Heart right ventricle (tissue), 16 donors: ENCODE measurements at regions of chr1 and their contacts with region 1.

Region 1: GRCh38 chr1:41516168-41517061 is 31.9 kb upstream of the EDN2 start:
- DNase-seq: peak; percentile 91 to 94
- ATAC-seq: peak; percentile 94 to 98 (median 96)
- H3K4me3 ChIP-seq: peak overlapping the region; percentile 26 to 58 (median 50)
- H3K27ac ChIP-seq: peak overlapping the region in 5 of 10 donors; percentile 15 to 48 (median 21)
- H3K4me1 ChIP-seq: peaks cover 16 to 38% (median 22%) of the 10 kb centered on the region in 9 donors
- H3K27me3 ChIP-seq: no peaks in the 10 kb centered on the region
- CTCF ChIP-seq: peak; percentile 90 to 97 (median 92)

Region 2: GRCh38 chr1:41496080-41497055 is 20.0 kb before region 1 on chr1:
- intact Hi-C with region 1: loop called in 1 of 10 experiments (anchors 2 kb)
- DNase-seq: peak; percentile 84 to 90
- ATAC-seq: peak; percentile 74 to 87 (median 84)
- H3K4me3 ChIP-seq: peak overlapping the region in 9 of 10 donors; percentile 9 to 54 (median 44)
- H3K27ac ChIP-seq: peak overlapping the region; percentile 77 to 97 (median 92)
- H3K4me1 ChIP-seq: peaks cover 17 to 64% (median 44%) of the 10 kb centered on the region in 9 donors
- H3K27me3 ChIP-seq: peaks cover 0 to 17% (median 0%) of the 10 kb centered on the region in 7 donors
- CTCF ChIP-seq: peak in 4 of 9 donors; percentile 7 to 41 (median 26)

Region 3: GRCh38 chr1:41558761-41559171 is 42.4 kb after region 1 on chr1:
- intact Hi-C with region 1: loop called in 1 of 10 experiments (anchors 5 kb)
- DNase-seq: peak; percentile 72 to 83
- ATAC-seq: peak; percentile 88 to 99 (median 96)
- H3K4me3 ChIP-seq: no peak overlapping the region
- H3K27ac ChIP-seq: peak overlapping the region in 6 of 10 donors; percentile 9 to 69 (median 59)
- H3K4me1 ChIP-seq: peaks cover 0 to 19% (median 7%) of the 10 kb centered on the region in 9 donors
- H3K27me3 ChIP-seq: no peaks in the 10 kb centered on the region
- CTCF ChIP-seq: no peak

Region 4: DNA sequence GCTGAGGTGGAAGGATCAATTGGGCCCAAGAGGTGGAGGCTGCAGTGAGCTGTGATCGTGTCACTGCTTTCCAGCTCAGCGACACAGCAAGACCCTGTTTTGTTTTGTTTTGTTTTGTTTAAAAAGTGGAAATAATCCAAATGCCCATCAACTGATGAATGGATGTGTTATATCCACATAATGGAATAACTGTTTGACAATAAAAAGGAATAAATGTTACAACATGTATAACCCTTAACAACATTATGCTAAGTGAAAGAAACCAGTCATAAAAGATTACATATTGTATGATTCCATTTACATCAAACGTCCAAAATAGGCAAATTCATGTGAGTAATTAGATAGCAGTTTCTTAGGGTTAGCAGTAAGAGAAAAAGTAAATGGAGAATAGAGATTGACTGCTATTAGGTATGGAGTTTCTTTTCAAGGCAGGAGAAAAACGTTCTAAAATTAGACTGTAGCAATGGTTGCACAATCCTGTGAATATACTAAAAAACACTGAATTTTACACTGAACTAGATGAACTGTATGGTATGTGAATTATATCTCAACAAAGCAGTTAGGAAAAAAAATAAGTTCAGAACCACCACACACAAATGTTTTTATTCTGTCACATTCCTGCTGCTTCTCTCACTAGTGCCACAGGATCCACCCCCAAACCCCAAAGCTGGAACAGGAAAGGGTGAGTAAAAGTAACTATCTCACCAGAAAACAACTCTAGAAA is 802.9 kb after region 1 on chr1:
- intact Hi-C with region 1: no loop called
- DNase-seq: no peak
- ATAC-seq: no peak
- H3K4me3 ChIP-seq: no peak overlapping the region
- H3K27ac ChIP-seq: peak overlapping the region; percentile 39 to 81 (median 70)
- H3K4me1 ChIP-seq: peaks cover 0 to 98% (median 77%) of the 10 kb centered on the region in 9 donors
- H3K27me3 ChIP-seq: no peaks in the 10 kb centered on the region
- CTCF ChIP-seq: no peak